Dorsolateral prefrontal cortex (tissue), 120 donors: ENCODE measurements at regions of chr6 and their contacts with region 1.

Region 1: DNA sequence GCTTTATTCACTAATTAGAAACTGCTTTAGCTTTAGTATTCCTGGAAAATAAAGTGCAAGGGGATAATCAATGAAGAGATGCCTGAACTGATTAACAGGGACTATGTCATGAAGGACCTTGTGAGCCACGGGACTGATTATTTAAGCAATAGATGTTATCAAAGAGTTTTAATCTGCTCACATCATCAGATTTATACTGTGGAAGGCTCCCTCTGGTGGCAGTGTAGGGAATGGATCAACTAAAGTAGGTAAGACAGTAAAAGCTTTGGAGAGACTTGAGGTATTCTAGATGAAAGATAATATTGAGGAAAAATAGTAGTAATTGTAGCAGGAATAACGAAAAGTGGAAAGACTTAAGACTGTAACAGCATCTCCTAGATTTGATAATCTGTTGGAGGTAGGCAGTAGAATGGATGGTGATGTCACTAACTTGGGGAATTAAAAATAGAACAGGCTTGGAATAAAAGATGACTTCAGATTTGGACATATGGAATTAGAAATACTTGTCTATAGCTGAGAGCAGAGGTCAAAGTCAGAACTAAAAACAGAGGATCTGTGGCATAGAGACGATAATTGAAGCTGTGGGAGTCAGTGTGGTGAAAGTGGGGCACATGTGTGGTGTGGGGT is 80.3 kb upstream of the HTR1E start:
- DNase-seq: peak in 4 of 10 donors; percentile 16 to 54 (median 47)
- H3K4me3 ChIP-seq: no peak overlapping the region
- H3K27ac ChIP-seq: no peak overlapping the region
- H3K27me3 ChIP-seq: peaks cover 0 to 4% (median 0%) of the 10 kb centered on the region in 45 donors
- CTCF ChIP-seq: peak; percentile 30 to 78 (median 68)

Region 2: DNA sequence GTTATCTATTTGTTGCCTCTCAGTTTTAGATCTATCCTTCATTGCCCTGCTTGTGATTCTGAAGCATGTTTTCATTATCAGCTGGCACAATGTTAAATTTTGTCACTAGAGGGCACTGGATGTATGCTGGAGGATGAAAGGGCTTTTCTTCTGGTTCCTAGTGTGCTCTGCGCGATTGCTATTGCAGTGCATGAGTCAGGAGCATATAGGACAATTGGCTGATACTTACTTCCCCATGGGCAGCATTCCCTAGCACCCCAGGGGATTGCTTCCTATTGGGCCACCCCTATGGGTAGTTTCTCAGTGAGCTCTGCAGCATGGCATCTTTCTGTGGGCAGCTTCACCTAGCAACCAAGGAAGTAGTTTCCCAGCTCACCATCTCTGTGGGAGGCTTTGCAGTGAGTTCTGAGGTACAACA is 934.0 kb before region 1 on chr6:
- intact Hi-C with region 1: loop called (anchors 5 kb)
- DNase-seq: peak in 3 of 10 donors; percentile 46 to 59 (median 49)
- H3K4me3 ChIP-seq: no peak overlapping the region
- H3K27ac ChIP-seq: peak overlapping the region in 6 of 59 donors; percentile 16 to 58 (median 38)
- H3K27me3 ChIP-seq: no peaks in the 10 kb centered on the region
- CTCF ChIP-seq: peak; percentile 36 to 79 (median 66)

Region 3: GRCh38 chr6:86832686-86833085 is 24.4 kb before region 1 on chr6:
- intact Hi-C with region 1: no loop called
- DNase-seq: no peak
- H3K4me3 ChIP-seq: no peak overlapping the region
- H3K27ac ChIP-seq: no peak overlapping the region
- H3K27me3 ChIP-seq: no peaks in the 10 kb centered on the region
- CTCF ChIP-seq: no peak

Region 4: GRCh38 chr6:86888301-86888700 is 31.3 kb after region 1 on chr6:
- intact Hi-C with region 1: no loop called
- DNase-seq: no peak
- H3K4me3 ChIP-seq: no peak overlapping the region
- H3K27ac ChIP-seq: no peak overlapping the region
- H3K27me3 ChIP-seq: no peaks in the 10 kb centered on the region
- CTCF ChIP-seq: no peak